Common myeloid progenitor, CD34-positive (primary cell): ENCODE measurements at regions of chr1 and their contacts with region 1.

Region 1: GRCh38 chr1:113072757-113073478 is at the start of gene LRIG2:
- DNase-seq: peak; percentile 98
- H3K4me3 ChIP-seq: peak within 1 kb of the TSS; percentile 83 to 97 (median 90)
- H3K27ac ChIP-seq: peak within 1 kb of the TSS; percentile 79 to 96
- H3K4me1 ChIP-seq: peaks cover 6 to 16% (median 14%) of the 10 kb centered on the region in 4 experiments
- H3K27me3 ChIP-seq: no peaks in the 10 kb centered on the region

Region 2: GRCh38 chr1:112882271-112882744 is 190.6 kb before region 1 on chr1:
- CTCF ChIA-PET with region 1: interaction called, 19 read pairs
- POLR2A ChIA-PET with region 1: no interaction called
- DNase-seq: no peak
- H3K4me3 ChIP-seq: no peak overlapping the region
- H3K27ac ChIP-seq: peak overlapping the region in 1 of 2 experiments; percentile 22
- H3K4me1 ChIP-seq: peaks cover 0 to 10% (median 0%) of the 10 kb centered on the region in 4 experiments
- H3K27me3 ChIP-seq: peaks cover 0 to 14% (median 2%) of the 10 kb centered on the region in 5 experiments

Region 3: GRCh38 chr1:113042285-113043143 is 30.4 kb before region 1 on chr1:
- CTCF ChIA-PET with region 1: interaction called, 14 read pairs
- POLR2A ChIA-PET with region 1: interaction called, 3 read pairs
- DNase-seq: peak; percentile 80 to 85 (median 84)
- H3K4me3 ChIP-seq: peak overlapping the region in 1 of 7 experiments; percentile 11
- H3K27ac ChIP-seq: no peak overlapping the region
- H3K4me1 ChIP-seq: peaks cover 9 to 33% (median 16%) of the 10 kb centered on the region in 4 experiments
- H3K27me3 ChIP-seq: no peaks in the 10 kb centered on the region

Region 4: GRCh38 chr1:113057006-113057405 is 15.9 kb before region 1 on chr1:
- CTCF ChIA-PET with region 1: interaction called, 31 read pairs
- POLR2A ChIA-PET with region 1: no interaction called
- DNase-seq: peak in 1 of 3 donors; percentile 22
- H3K4me3 ChIP-seq: no peak overlapping the region
- H3K27ac ChIP-seq: no peak overlapping the region
- H3K4me1 ChIP-seq: peaks cover 0 to 7% (median 2%) of the 10 kb centered on the region in 4 experiments
- H3K27me3 ChIP-seq: no peaks in the 10 kb centered on the region

Region 5: GRCh38 chr1:113088972-113089371 is 16.1 kb after region 1 on chr1:
- CTCF ChIA-PET with region 1: interaction called, 11 read pairs
- POLR2A ChIA-PET with region 1: no interaction called
- DNase-seq: peak in 2 of 3 donors; percentile 14 to 56
- H3K4me3 ChIP-seq: no peak overlapping the region
- H3K27ac ChIP-seq: no peak overlapping the region
- H3K4me1 ChIP-seq: no peaks in the 10 kb centered on the region
- H3K27me3 ChIP-seq: no peaks in the 10 kb centered on the region

Region 6: DNA sequence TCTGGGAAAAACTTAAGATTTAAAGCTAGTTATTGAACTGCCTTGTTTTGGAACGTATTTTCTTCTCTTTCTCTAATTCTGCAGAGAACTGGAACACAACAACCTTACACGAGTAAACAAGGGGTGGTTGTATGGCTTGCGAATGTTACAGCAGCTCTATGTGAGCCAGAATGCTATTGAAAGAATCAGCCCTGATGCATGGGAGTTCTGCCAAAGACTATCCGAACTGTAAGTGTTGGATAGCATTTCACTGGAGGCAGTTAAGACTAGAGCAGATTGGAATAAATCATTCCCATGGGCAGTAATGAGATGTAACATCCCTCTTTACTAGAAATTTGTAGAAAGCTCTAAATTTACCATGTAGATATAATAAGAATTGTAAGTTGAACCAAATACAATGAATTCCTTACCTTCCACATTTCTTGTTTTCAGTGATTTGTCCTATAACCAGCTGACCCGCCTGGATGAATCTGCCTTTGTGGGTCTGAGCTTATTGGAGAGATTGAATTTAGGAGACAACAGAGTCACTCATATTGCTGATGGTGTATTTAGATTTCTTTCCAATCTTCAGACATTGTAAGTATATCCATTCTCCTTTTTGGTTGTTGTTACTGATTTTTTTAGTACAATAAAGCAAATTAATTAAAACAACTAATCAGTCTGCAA is 23.0 kb after region 1 on chr1:
- CTCF ChIA-PET with region 1: interaction called, 10 read pairs
- POLR2A ChIA-PET with region 1: no interaction called
- DNase-seq: no peak
- H3K4me3 ChIP-seq: no peak overlapping the region
- H3K27ac ChIP-seq: no peak overlapping the region
- H3K4me1 ChIP-seq: no peaks in the 10 kb centered on the region
- H3K27me3 ChIP-seq: no peaks in the 10 kb centered on the region

Region 7: DNA sequence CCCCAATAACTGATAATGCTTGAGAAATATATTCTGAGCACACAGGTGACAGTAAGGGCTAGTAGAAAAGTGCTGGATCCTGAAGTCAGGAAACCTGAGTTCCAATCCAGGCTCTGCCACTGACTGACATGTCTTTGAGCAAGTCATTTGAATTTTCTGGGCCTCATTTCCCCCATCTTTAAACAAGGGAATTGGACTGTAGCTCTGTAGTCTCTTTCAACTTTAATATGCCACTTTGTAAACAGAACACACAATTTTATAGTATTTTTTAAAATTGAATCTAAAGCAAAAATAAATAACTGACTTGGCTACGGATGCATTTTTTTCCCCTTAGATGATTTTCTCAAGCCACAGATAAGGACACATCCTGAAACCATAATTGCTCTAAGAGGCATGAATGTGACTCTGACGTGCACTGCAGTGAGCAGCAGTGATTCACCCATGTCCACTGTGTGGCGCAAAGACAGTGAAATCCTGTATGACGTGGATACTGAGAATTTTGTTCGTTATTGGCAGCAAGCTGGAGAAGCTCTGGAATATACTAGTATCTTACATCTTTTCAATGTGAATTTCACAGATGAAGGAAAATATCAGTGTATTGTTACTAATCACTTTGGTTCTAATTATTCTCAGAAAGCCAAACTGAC is 37.1 kb after region 1 on chr1:
- CTCF ChIA-PET with region 1: no interaction called
- POLR2A ChIA-PET with region 1: no interaction called
- DNase-seq: no peak
- H3K4me3 ChIP-seq: no peak overlapping the region
- H3K27ac ChIP-seq: no peak overlapping the region
- H3K4me1 ChIP-seq: no peaks in the 10 kb centered on the region
- H3K27me3 ChIP-seq: no peaks in the 10 kb centered on the region

Region 8: GRCh38 chr1:113170519-113170918 is 97.6 kb after region 1 on chr1:
- CTCF ChIA-PET with region 1: no interaction called
- POLR2A ChIA-PET with region 1: no interaction called
- DNase-seq: no peak
- H3K4me3 ChIP-seq: no peak overlapping the region
- H3K27ac ChIP-seq: no peak overlapping the region
- H3K4me1 ChIP-seq: no peaks in the 10 kb centered on the region
- H3K27me3 ChIP-seq: no peaks in the 10 kb centered on the region